ENCODE measurements at regions of chr19 and their contacts with region 1.

Region 1: GRCh38 chr19:44770550-44771257 is 7.0 kb upstream of the CBLC start:
- DNase-seq: peak; percentile 98
- ATAC-seq: peak; percentile 100
- H3K4me3 ChIP-seq: peak overlapping the region in 3 of 5 experiments; percentile 8 to 32 (median 18)
- H3K4me3 Mint-ChIP-seq: peak overlapping the region; percentile 63
- H3K27ac ChIP-seq: no peak overlapping the region
- H3K27ac Mint-ChIP-seq: peak overlapping the region; percentile 74
- H3K4me1 ChIP-seq: peaks cover 8 to 20% of the 10 kb centered on the region in 2 donors
- H3K4me1 Mint-ChIP-seq: peaks cover 28% of the 10 kb centered on the region
- H3K27me3 ChIP-seq: no peaks in the 10 kb centered on the region
- H3K27me3 Mint-ChIP-seq: no peaks in the 10 kb centered on the region
- CTCF ChIP-seq: peak; percentile 76

Region 2: DNA sequence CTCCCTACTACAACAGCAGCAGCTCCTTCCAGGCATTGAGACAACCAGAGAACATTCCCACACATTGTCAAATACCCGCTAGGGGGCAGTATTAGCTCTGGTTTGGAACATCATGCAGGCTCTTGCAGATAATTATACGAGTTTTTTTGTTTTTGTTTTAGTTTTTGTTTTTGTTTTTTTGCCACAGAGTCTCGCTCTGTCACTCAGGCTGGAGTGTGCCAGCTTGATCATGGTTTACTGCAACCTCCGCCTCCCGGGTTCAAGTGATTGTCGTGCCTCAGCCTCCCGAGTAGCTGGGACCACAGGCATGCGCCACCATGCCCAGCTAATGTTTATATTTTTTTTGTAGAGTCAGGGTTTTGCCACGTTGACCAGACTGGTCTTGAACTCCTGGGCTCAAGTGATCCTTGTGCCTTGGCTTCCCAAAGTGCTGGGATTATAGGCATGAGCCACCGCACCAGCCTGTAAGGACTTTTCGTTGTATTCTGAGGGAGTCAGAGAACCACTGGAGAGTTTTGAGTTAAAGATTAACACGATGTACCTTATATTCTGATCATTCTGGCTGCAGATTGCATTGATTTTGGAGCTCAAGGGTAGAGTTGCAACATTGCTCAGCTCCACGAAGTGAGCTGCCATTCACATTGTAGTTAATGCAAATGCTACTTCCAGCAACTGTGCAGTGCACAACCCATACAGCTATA is 199.6 kb before region 1 on chr19:
- CTCF ChIA-PET with region 1: no interaction called
- POLR2A ChIA-PET with region 1: no interaction called
- intact Hi-C with region 1: no loop called
- DNase-seq: peak; percentile 65
- ATAC-seq: no peak
- H3K4me3 ChIP-seq: no peak overlapping the region
- H3K4me3 Mint-ChIP-seq: no peak overlapping the region
- H3K27ac ChIP-seq: no peak overlapping the region
- H3K27ac Mint-ChIP-seq: no peak overlapping the region
- H3K4me1 ChIP-seq: no peaks in the 10 kb centered on the region
- H3K4me1 Mint-ChIP-seq: no peaks in the 10 kb centered on the region
- H3K27me3 ChIP-seq: peaks cover 0 to 2% (median 0%) of the 10 kb centered on the region in 4 experiments
- H3K27me3 Mint-ChIP-seq: peaks cover 21% of the 10 kb centered on the region
- CTCF ChIP-seq: peak; percentile 69

Region 3: GRCh38 chr19:44653977-44654774 is 116.5 kb before region 1 on chr19:
- CTCF ChIA-PET with region 1: interaction called, 19 read pairs
- POLR2A ChIA-PET with region 1: interaction called, 4 read pairs
- intact Hi-C with region 1: no loop called
- DNase-seq: peak; percentile 94
- ATAC-seq: peak; percentile 97
- H3K4me3 ChIP-seq: no peak overlapping the region
- H3K4me3 Mint-ChIP-seq: no peak overlapping the region
- H3K27ac ChIP-seq: peak overlapping the region; percentile 52 to 65
- H3K27ac Mint-ChIP-seq: peak overlapping the region; percentile 80
- H3K4me1 ChIP-seq: peaks cover 7 to 18% of the 10 kb centered on the region in 2 donors
- H3K4me1 Mint-ChIP-seq: peaks cover 18% of the 10 kb centered on the region
- H3K27me3 ChIP-seq: no peaks in the 10 kb centered on the region
- H3K27me3 Mint-ChIP-seq: peaks cover 6% of the 10 kb centered on the region
- CTCF ChIP-seq: peak; percentile 79

Region 4: GRCh38 chr19:44666852-44667556 is 103.7 kb before region 1 on chr19:
- CTCF ChIA-PET with region 1: no interaction called
- POLR2A ChIA-PET with region 1: no interaction called
- intact Hi-C with region 1: no loop called
- DNase-seq: no peak
- ATAC-seq: no peak
- H3K4me3 ChIP-seq: no peak overlapping the region
- H3K4me3 Mint-ChIP-seq: no peak overlapping the region
- H3K27ac ChIP-seq: no peak overlapping the region
- H3K27ac Mint-ChIP-seq: no peak overlapping the region
- H3K4me1 ChIP-seq: no peaks in the 10 kb centered on the region
- H3K4me1 Mint-ChIP-seq: no peaks in the 10 kb centered on the region
- H3K27me3 ChIP-seq: no peaks in the 10 kb centered on the region
- H3K27me3 Mint-ChIP-seq: peaks cover 6% of the 10 kb centered on the region
- CTCF ChIP-seq: no peak

Region 5: GRCh38 chr19:44712864-44713515 is 57.7 kb before region 1 on chr19:
- CTCF ChIA-PET with region 1: interaction called, 10 read pairs
- POLR2A ChIA-PET with region 1: no interaction called
- intact Hi-C with region 1: no loop called
- DNase-seq: no peak
- ATAC-seq: no peak
- H3K4me3 ChIP-seq: no peak overlapping the region
- H3K4me3 Mint-ChIP-seq: no peak overlapping the region
- H3K27ac ChIP-seq: no peak overlapping the region
- H3K27ac Mint-ChIP-seq: no peak overlapping the region
- H3K4me1 ChIP-seq: no peaks in the 10 kb centered on the region
- H3K4me1 Mint-ChIP-seq: no peaks in the 10 kb centered on the region
- H3K27me3 ChIP-seq: peaks cover 0 to 11% (median 0%) of the 10 kb centered on the region in 4 experiments
- H3K27me3 Mint-ChIP-seq: peaks cover 9% of the 10 kb centered on the region
- CTCF ChIP-seq: no peak

Region 6: GRCh38 chr19:44746946-44747738 is 23.6 kb before region 1 on chr19:
- CTCF ChIA-PET with region 1: interaction called, 30 read pairs
- POLR2A ChIA-PET with region 1: interaction called, 65 read pairs
- intact Hi-C with region 1: loop called (anchors 1 kb)
- DNase-seq: peak; percentile 89
- ATAC-seq: peak; percentile 67
- H3K4me3 ChIP-seq: peak overlapping the region; percentile 58 to 95 (median 81)
- H3K4me3 Mint-ChIP-seq: peak overlapping the region; percentile 95
- H3K27ac ChIP-seq: peak overlapping the region; percentile 84 to 89
- H3K27ac Mint-ChIP-seq: peak overlapping the region; percentile 93
- H3K4me1 ChIP-seq: peaks cover 42 to 56% of the 10 kb centered on the region in 2 donors
- H3K4me1 Mint-ChIP-seq: peaks cover 51% of the 10 kb centered on the region
- H3K27me3 ChIP-seq: no peaks in the 10 kb centered on the region
- H3K27me3 Mint-ChIP-seq: no peaks in the 10 kb centered on the region
- CTCF ChIP-seq: no peak

Region 7: DNA sequence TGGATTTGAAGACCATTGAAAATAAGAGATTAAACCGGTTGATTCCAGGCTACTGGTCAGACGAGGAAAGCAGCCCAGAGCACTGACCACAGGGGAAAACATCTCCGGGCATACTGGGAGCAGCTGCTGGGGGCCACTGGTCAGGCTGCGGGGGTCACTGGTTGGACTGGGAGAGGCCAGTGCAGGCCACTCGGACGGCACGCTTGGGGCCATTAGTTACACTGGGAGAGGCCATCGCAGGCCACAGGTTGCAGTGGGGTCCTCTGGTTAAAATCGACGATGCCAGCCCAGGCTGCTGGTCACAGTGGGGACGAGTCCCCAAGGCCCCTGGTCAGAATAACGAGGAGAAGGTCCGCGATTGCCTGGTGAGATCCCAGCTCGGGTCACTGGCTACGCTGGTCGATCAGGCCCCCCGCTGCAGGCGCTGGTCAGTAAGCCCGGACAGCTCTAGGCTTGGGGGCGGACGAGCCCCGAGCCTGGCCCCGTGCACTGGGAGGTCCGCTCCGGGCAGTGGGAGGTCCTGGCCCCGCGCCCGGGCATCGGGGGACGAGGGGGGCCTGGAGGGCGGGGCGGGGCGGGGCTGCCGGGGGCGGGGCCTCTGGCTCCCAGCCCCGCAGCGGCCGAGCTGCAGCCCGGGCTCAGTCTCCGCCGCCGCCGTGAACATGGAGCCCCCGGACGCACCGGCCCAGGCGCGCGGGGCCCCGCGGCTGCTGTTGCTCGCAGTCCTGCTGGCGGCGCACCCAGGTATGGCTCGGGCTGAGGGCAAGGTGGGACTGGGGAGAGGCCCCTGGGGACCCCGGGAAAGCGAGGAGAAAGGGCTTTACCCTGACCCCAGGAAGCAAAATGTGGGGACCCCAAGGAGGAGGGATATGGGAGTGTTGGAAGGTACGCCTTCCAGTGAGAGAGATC is 38.0 kb after region 1 on chr19 and contains the start of gene BCAM:
- CTCF ChIA-PET with region 1: interaction called, 10 read pairs
- POLR2A ChIA-PET with region 1: no interaction called
- intact Hi-C with region 1: no loop called
- DNase-seq: no peak
- ATAC-seq: peak; percentile 28
- H3K4me3 ChIP-seq: peak within 1 kb of the TSS in 1 of 5 experiments; percentile 24
- H3K4me3 Mint-ChIP-seq: peak within 1 kb of the TSS; percentile 23
- H3K27ac ChIP-seq: no peak within 1 kb of the TSS
- H3K27ac Mint-ChIP-seq: no peak within 1 kb of the TSS
- H3K4me1 ChIP-seq: peaks cover 10% of the 10 kb centered on the region in 2 donors
- H3K4me1 Mint-ChIP-seq: peaks cover 9% of the 10 kb centered on the region
- H3K27me3 ChIP-seq: peaks cover 0 to 31% (median 7%) of the 10 kb centered on the region in 4 experiments
- H3K27me3 Mint-ChIP-seq: peaks cover 33% of the 10 kb centered on the region
- CTCF ChIP-seq: no peak
- total RNA-seq, gene BCAM: not detected in 2 replicates

Measured in B cell (primary cell).